Activated CD8-positive, alpha-beta memory T cell treated with anti-CD3 and anti-CD28 coated beads, Interleukin-2, amount 10 ng/mL, durations not matched to agents 7 days and 5 days (primary cell): ENCODE measurements at regions of chr2 and their contacts with region 1.

Region 1: GRCh38 chr2:24421668-24422067 is 61.3 kb upstream of the ITSN2 start:
- DNase-seq: peak; percentile 68
- ATAC-seq: peak; percentile 42
- H3K4me3 Mint-ChIP-seq: no peak overlapping the region
- H3K27ac Mint-ChIP-seq: no peak overlapping the region
- H3K4me1 Mint-ChIP-seq: peaks cover 2% of the 10 kb centered on the region
- H3K27me3 Mint-ChIP-seq: peaks cover 3% of the 10 kb centered on the region

Region 2: DNA sequence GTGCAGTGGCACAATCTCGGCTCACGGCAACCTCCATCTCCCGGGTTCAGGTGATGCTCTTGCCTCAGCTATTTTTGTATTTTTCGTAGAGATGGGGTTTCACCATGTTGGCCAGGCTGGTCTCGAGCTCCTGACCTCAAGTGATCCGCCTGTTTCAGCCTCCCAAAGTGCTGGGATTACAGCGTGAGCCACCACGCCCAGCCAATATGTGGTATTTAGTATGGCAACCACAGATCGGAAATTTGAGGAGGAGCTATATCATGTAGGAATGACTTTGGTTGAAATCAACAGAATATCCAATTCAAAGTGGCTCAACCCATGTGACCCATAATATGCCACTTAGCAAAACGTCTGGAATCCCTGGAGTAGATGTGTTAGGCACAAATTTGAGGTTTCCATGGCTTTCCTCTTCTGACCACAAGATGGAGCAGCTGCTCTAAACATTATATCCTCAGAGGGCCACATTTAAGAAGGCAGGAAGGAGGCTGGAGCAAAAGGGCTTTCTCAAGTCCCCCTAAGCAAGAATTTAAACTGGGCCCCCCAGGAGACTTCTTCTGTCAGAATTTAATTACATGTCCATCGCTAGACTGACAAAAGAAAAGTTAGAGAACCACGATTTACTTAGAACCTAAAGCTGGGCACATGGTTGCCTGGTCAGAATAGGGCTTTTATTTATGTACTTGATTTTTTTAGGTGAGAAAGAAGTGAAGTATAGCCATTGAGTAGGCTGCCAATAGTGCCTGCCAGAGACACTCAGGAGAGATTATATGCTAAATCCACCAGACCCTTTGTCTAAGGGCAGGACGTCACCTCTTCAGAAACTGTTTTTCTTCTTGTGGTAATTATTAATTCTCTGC is 11.7 kb before region 1 on chr2:
- CTCF ChIA-PET with region 1: interaction called, 18 read pairs
- DNase-seq: peak; percentile 52
- ATAC-seq: peak; percentile 70
- H3K4me3 Mint-ChIP-seq: no peak overlapping the region
- H3K27ac Mint-ChIP-seq: no peak overlapping the region
- H3K4me1 Mint-ChIP-seq: peaks cover 3% of the 10 kb centered on the region
- H3K27me3 Mint-ChIP-seq: peaks cover 4% of the 10 kb centered on the region

Region 3: GRCh38 chr2:24482251-24482971 is 60.7 kb after region 1 on chr2:
- CTCF ChIA-PET with region 1: no interaction called
- DNase-seq: no peak
- ATAC-seq: no peak
- H3K4me3 Mint-ChIP-seq: no peak overlapping the region
- H3K27ac Mint-ChIP-seq: no peak overlapping the region
- H3K4me1 Mint-ChIP-seq: no peaks in the 10 kb centered on the region
- H3K27me3 Mint-ChIP-seq: no peaks in the 10 kb centered on the region